K562 (cell line): ENCODE measurements at regions of chrX and their contacts with region 1.

Region 1: DNA sequence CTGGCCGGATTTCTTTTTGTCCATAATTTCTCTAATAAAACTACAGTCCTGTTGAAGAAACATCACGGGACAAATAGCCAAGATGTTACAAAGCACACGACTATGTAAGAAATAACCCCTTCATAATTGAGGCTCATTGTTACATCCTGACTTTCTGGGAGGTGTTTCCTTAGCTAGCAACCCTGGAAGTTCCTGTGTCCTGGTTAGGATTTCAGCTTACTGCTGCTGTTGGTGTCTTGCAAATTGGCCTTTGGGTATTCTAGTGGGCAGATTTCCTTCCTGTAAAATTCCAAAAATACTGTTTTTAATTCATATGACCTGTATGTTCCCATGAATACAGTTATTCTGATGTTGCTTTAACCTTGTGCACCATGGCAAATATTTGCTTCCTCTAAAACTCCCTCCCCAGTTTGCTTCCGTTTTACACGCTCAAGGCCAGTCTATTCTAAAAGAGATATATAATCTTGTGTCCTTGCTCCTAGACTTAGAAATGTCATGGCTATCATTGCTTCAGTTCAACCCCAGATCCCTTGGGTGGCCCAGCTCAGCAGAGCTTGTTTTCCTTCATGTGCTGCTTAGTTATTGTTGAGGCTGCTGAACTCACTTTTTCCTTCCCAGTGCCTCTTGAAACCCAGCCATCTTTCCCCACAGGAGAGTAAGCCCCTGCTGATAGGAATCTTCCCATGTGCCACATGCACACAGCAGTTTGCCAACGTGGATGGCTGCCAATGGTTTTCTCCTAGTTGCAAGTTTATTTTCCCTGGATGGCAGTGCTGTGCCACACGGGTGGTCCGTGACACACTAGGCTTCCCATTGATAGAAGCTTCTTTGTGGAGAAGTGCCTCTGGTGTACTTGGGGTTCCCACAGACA is 75.8 kb downstream of the TSPAN7 start:
- DNase-seq: no peak
- ATAC-seq: no peak
- H3K4me3 ChIP-seq: no peak overlapping the region
- H3K27ac ChIP-seq: no peak overlapping the region; the same call in 2 of the 3 replicates
- H3K4me1 ChIP-seq: peaks cover 8 to 69% of the 10 kb centered on the region in 2 experiments
- H3K27me3 ChIP-seq: no peaks in the 10 kb centered on the region
- CTCF ChIP-seq: no peak
- EP300 ChIP-seq: no peak
- POLR2A ChIP-seq: no peak
- RAD21 ChIP-seq: no peak

Region 2: GRCh38 chrX:38458071-38458470 is 179.1 kb before region 1 on chrX:
- CTCF ChIA-PET with region 1: no interaction called
- POLR2A ChIA-PET with region 1: no interaction called
- in situ Hi-C with region 1: no loop called
- intact Hi-C with region 1: loop called (anchors 10 kb)
- DNase-seq: no peak
- ATAC-seq: no peak
- H3K4me3 ChIP-seq: no peak overlapping the region
- H3K27ac ChIP-seq: no peak overlapping the region
- H3K4me1 ChIP-seq: no peaks in the 10 kb centered on the region
- H3K27me3 ChIP-seq: no peaks in the 10 kb centered on the region
- CTCF ChIP-seq: peak in 2 of 3 experiments; percentile 2 to 24; a peak in 1 of 6 replicates
- EP300 ChIP-seq: no peak
- POLR2A ChIP-seq: no peak
- RAD21 ChIP-seq: peak in 1 of 2 experiments; percentile 23; a peak in 1 of 4 replicates

Region 3: GRCh38 chrX:38652934-38653442 is 15.8 kb after region 1 on chrX:
- CTCF ChIA-PET with region 1: no interaction called
- POLR2A ChIA-PET with region 1: interaction called, 3 read pairs
- in situ Hi-C with region 1: no loop called
- intact Hi-C with region 1: loop called (anchors 1 kb)
- DNase-seq: peak; percentile 64 to 91 (median 78)
- ATAC-seq: peak; percentile 93
- H3K4me3 ChIP-seq: no peak overlapping the region
- H3K27ac ChIP-seq: peak overlapping the region; percentile 92
- H3K4me1 ChIP-seq: peaks cover 20 to 51% of the 10 kb centered on the region in 2 experiments; a peak in 4 of 5 replicates
- H3K27me3 ChIP-seq: no peaks in the 10 kb centered on the region
- CTCF ChIP-seq: peak; percentile 59 to 71 (median 63)
- EP300 ChIP-seq: peak; percentile 94
- POLR2A ChIP-seq: no peak
- RAD21 ChIP-seq: peak in 1 of 2 experiments; percentile 17; a peak in 2 of 4 replicates